ENCODE measurements at regions of chr13 and their contacts with region 1.

Region 1: GRCh38 chr13:42298405-42298804 is 26.5 kb downstream of the AKAP11 start:
- DNase-seq: no peak
- H3K4me3 ChIP-seq: no peak overlapping the region
- H3K27ac ChIP-seq: no peak overlapping the region
- H3K27me3 ChIP-seq: no peaks in the 10 kb centered on the region
- CTCF ChIP-seq: no peak

Region 2: DNA sequence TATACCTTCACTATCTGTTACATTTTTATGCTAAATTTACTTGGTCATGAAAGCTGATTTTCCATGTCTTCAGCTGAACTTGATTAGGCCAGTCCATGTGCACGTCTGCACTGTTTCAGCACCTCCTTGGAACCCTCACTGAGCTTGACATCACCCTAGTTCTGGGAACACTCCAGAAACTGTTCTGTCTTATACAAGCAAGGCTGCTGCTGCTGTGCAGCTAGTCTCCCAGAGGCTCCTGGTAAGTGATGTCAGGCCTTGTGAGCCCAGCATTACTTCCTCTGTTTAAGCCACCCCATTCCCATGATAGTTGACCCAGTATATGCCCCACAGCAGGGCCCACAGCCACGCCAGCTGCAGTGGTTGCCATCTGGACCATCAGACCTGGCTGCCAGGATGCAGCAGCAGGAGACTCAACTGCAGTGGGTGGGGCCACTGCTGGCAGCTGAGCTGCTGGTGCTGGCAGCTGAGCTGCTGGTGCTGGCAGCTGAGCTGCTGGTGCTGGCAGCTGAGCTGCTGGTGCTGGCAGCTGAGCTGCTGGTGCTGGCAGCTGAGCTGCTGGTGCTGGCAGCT is 116.9 kb before region 1 on chr13:
- intact Hi-C with region 1: no loop called
- DNase-seq: no peak
- H3K4me3 ChIP-seq: no peak overlapping the region
- H3K27ac ChIP-seq: no peak overlapping the region
- H3K27me3 ChIP-seq: no peaks in the 10 kb centered on the region
- CTCF ChIP-seq: no peak

Region 3: GRCh38 chr13:42279080-42279479 is 19.3 kb before region 1 on chr13:
- intact Hi-C with region 1: loop called in 1 of 2 experiments (anchors 2 kb)
- DNase-seq: no peak
- H3K4me3 ChIP-seq: no peak overlapping the region
- H3K27ac ChIP-seq: no peak overlapping the region
- H3K27me3 ChIP-seq: no peaks in the 10 kb centered on the region
- CTCF ChIP-seq: no peak

Region 4: DNA sequence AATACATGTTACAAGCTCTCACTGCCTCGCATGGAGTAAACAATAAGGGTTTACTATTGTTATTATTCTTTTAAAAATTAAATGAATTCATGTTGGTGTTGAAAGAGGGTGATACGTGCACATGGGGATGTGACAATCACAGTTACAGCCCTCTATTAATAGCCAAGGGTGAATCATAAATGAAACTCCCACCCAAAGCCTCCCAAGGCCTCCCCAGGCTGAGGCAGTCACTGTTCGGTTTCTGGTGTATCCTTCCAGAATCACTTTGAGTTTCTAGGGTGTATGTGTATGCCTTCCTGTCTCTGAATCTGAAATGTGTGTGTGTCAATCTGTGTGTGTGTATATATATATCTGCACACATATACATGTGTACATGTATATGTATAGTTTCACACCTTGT is 47.0 kb after region 1 on chr13:
- intact Hi-C with region 1: no loop called
- DNase-seq: no peak
- H3K4me3 ChIP-seq: no peak overlapping the region
- H3K27ac ChIP-seq: no peak overlapping the region
- H3K27me3 ChIP-seq: peaks cover 0 to 3% (median 0%) of the 10 kb centered on the region in 45 donors
- CTCF ChIP-seq: no peak

Measured in dorsolateral prefrontal cortex (tissue), 120 donors.